ENCODE measurements at regions of chr17 and their contacts with region 1.

Region 1: GRCh38 chr17:51153210-51154072 is at the start of gene NME1:
- DNase-seq: peak; percentile 92 to 97 (median 97)
- H3K4me3 ChIP-seq: peak within 1 kb of the TSS; percentile 68
- H3K4me3 Mint-ChIP-seq: no peak within 1 kb of the TSS
- H3K27ac ChIP-seq: peak within 1 kb of the TSS; percentile 60
- H3K27ac Mint-ChIP-seq: no peak within 1 kb of the TSS
- H3K4me1 ChIP-seq: peaks cover 16% of the 10 kb centered on the region
- H3K4me1 Mint-ChIP-seq: peaks cover 0 to 8% (median 0%) of the 10 kb centered on the region in 3 donors
- H3K27me3 ChIP-seq: no peaks in the 10 kb centered on the region
- H3K27me3 Mint-ChIP-seq: no peaks in the 10 kb centered on the region
- total RNA-seq, gene NME1: 401 to 404 TPM

Region 2: DNA sequence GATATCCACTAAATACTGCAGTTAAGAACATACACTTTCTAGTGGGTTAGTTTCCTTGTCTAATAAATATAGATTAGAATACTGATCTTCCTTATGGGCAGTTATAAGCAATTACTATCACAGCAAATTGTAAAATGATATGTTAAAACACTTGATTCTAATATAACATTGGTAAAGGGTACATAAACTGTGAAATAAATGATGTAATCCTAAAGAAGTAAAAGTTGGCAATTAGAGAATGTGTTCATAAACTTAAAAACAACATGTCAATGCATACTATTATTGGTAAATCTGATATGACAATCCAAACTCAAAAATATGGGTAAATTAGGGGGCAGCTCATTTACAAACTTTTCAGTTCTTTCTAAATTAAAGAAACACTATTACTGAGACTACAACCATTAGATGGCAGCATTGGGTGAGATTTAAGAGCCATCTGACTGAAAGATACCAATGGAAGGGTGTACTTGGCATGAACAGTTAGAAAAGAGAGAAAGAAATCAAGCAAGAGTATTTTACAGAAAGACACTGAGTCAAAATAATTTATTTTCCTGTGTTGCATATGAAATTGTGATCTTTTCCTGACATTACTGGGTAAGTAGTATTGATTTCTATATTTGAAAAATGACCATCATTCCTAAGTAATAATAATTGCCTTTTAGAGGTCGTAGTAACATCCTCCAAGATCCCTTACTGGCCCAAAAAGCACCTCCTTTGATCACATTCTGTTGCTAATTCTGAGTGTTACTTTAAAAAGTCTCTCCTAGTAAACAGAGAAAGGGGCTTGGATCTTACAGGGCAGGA is 152.4 kb before region 1 on chr17:
- CTCF ChIA-PET with region 1: interaction called, 44 read pairs
- POLR2A ChIA-PET with region 1: interaction called, 4 read pairs
- DNase-seq: peak in 3 of 5 donors; percentile 49 to 63 (median 59)
- H3K4me3 ChIP-seq: no peak overlapping the region
- H3K4me3 Mint-ChIP-seq: no peak overlapping the region
- H3K27ac ChIP-seq: no peak overlapping the region
- H3K27ac Mint-ChIP-seq: peak overlapping the region in 3 of 8 donors; percentile 17 to 42 (median 39)
- H3K4me1 ChIP-seq: no peaks in the 10 kb centered on the region
- H3K4me1 Mint-ChIP-seq: peaks cover 0 to 6% (median 2%) of the 10 kb centered on the region in 3 donors
- H3K27me3 ChIP-seq: no peaks in the 10 kb centered on the region
- H3K27me3 Mint-ChIP-seq: no peaks in the 10 kb centered on the region

Region 3: DNA sequence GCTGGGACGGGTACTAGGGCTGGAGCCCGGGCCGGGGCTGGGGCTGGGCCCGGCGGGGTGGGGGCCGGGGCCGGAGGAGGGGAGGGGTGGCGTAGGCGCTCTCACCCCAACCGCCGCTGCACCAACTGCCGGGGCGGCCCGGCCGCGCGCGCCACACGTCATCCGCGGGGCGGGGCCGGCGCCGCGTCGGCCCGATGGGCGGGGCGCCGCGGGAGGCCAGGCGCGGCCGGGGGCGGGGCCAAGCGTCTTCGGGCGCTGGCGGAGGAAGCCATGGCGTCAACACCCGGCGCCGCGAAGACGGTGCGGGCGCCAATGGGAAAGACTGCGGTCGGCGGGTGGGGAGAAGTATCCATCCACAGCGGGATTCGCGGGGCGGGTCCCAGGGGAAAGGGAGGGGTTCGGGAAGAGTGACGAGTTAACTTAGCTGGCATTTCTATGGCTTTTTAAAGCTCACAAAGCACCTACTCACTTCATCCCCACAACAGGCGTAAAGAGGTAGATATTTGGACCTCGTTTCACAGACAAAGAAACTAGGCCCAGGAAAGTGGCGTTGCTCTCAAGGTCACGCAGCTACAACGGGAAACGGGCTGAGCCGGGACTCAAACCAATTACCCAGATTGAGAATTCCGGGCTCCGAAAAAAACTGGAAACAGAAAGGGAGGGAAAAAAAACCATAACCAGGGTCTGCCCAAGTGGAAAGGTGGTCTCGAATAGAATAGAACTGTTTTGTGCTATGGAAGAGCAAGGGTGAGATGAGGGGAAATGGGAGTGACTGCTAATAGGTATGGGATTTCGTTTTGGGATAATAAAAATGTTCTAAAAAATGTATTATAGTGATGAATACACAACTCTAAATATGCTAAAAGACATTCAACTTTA is 32.5 kb before region 1 on chr17 and contains the start of gene SPAG9:
- CTCF ChIA-PET with region 1: interaction called, 15 read pairs
- POLR2A ChIA-PET with region 1: interaction called, 23 read pairs
- DNase-seq: peak; percentile 90 to 93 (median 91)
- H3K4me3 ChIP-seq: peak within 1 kb of the TSS; percentile 79
- H3K4me3 Mint-ChIP-seq: peak within 1 kb of the TSS; percentile 97 to 99 (median 97)
- H3K27ac ChIP-seq: peak within 1 kb of the TSS; percentile 94
- H3K27ac Mint-ChIP-seq: peak within 1 kb of the TSS; percentile 96 to 100 (median 99)
- H3K4me1 ChIP-seq: peaks cover 35% of the 10 kb centered on the region
- H3K4me1 Mint-ChIP-seq: peaks cover 45 to 55% (median 54%) of the 10 kb centered on the region in 3 donors
- H3K27me3 ChIP-seq: no peaks in the 10 kb centered on the region
- H3K27me3 Mint-ChIP-seq: peaks cover 0 to 3% of the 10 kb centered on the region in 2 donors
- total RNA-seq, gene SPAG9: 40.6 to 43.0 TPM

Region 4: DNA sequence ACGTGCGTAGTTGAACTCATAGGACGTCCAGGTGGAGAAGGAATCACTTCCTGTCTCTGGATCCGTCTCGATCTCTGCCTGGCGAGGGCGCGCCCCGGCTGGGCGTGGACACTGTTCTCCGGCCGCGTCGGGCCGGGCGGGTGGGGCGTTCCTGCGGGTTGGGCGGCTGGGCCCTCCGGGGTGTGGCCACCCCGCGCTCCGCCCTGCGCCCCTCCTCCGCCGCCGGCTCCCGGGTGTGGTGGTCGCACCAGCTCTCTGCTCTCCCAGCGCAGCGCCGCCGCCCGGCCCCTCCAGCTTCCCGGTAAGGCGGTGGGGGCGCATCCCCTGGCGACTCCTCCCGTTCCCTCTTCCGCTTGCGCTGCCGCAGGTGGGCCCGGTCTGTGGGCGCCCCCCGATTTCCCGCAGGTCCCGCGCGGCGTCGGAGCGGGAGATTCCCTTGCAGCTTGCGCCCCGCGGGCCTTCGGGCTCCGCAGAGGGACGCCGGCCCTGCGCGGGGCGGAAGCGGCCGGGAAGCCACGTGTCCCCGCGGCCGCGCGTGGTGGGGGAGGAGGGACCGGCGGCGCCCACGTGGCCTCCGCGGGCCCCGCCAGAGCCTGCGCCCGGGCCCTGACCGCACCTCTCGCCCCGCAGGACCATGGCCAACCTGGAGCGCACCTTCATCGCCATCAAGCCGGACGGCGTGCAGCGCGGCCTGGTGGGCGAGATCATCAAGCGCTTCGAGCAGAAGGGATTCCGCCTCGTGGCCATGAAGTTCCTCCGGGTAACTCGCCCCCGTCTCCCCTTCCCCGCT is 13.0 kb after region 1 on chr17 and contains the start of gene NME2:
- CTCF ChIA-PET with region 1: interaction called, 16 read pairs
- POLR2A ChIA-PET with region 1: interaction called, 14 read pairs
- DNase-seq: peak; percentile 51 to 72 (median 61)
- H3K4me3 ChIP-seq: peak within 1 kb of the TSS; percentile 51
- H3K4me3 Mint-ChIP-seq: peak within 1 kb of the TSS; percentile 92 to 96 (median 96)
- H3K27ac ChIP-seq: peak within 1 kb of the TSS; percentile 55
- H3K27ac Mint-ChIP-seq: peak within 1 kb of the TSS; percentile 78 to 98 (median 96)
- H3K4me1 ChIP-seq: peaks cover 9% of the 10 kb centered on the region
- H3K4me1 Mint-ChIP-seq: peaks cover 14 to 34% (median 25%) of the 10 kb centered on the region in 3 donors
- H3K27me3 ChIP-seq: no peaks in the 10 kb centered on the region
- H3K27me3 Mint-ChIP-seq: no peaks in the 10 kb centered on the region
- total RNA-seq, gene NME2: 926 to 930 TPM

Measured in CD8-positive, alpha-beta memory T cell (primary cell).